Lower leg skin (tissue), 4 donors: ENCODE measurements at regions of chr20 and their contacts with region 1.

Region 1: DNA sequence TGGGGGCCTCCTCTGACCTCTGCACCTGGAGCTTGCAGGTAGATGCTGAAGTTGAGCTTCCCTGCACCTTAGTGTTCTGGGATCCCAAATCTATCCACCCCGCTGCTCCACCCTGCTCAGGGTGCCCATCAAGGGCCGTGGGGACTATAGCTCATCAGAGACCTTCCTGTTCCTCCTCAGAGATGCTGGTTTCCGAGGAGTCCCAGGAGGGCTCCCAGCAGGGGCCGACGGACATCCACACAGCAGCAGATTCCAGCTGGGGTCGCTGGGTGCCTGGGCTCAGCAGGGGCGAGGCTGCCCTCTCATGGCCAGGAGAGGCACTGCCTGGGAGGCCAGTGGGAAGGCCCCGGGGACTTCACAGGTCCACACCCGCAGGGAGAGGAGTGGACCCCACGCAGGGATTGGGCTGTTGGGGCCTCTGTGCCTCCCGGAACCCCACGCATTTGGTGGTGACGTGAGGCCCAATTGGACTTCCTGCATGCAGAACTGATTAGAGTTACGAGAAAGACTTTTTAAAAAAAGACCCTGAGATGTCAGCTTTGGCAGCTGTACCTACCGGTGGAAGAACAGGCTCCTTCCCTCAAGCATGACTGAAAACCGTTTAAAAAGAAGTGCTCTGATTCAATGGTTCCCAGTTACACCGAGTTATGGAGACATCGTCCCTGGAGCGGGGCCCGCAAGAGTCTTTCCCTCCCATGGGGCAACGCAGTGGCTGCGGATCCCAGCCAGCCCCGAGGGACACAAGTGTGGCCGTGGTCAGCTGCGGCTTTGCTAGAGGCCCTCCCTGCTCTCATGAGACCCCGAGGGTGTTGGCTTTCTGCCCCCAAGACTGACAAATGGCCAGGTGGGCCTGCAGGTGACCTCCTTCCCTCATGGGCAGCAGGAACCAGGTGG is 25.3 kb upstream of the SLCO4A1 start:
- DNase-seq: peak in 1 of 2 donors; percentile 94
- H3K4me3 ChIP-seq: no peak overlapping the region
- CTCF ChIP-seq: peak in 1 of 3 donors; percentile 60
- POLR2A ChIP-seq: no peak

Region 2: GRCh38 chr20:62219992-62220665 is 396.8 kb before region 1 on chr20 and contains the start of gene HRH3:
- intact Hi-C with region 1: no loop called
- DNase-seq: no peak
- H3K4me3 ChIP-seq: no peak within 1 kb of the TSS
- CTCF ChIP-seq: no peak
- POLR2A ChIP-seq: no peak
- total RNA-seq, gene HRH3: not detected

Region 3: GRCh38 chr20:62292108-62292507 is 324.9 kb before region 1 on chr20:
- intact Hi-C with region 1: no loop called
- DNase-seq: no peak
- H3K4me3 ChIP-seq: no peak overlapping the region
- CTCF ChIP-seq: no peak
- POLR2A ChIP-seq: no peak

Region 4: DNA sequence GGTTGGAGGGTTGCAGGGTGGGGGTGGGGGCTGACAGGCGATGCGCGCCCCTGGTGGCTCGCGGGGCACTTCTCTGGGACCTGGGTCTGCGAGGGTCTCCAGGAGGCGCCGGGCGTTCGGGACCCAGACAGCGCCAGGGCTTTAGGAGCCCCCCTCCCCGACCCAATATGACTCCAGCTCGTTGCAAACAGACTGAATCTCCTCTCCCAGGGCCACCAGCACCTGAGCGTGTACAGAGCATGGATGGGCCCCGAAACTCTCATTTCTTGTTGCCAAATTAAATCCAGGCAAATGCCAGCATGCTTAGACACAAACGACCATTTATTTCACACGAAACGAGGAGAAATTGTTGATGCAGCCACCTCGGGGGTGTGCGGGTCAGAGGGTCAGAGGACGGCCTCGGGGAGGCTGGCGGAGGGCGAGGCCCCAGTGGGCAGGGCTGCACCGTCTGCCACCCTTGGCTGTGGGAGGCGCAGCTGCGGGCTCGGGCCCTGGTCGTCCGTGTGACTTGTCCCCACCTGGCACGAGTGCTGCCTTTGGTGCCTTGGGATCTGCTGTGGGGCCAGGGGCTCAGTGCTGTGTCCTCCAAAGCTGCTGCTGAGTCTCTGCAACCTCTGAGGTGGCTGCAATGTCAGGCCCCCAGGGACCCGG is 120.3 kb before region 1 on chr20:
- intact Hi-C with region 1: loop called (anchors 10 kb)
- DNase-seq: no peak
- H3K4me3 ChIP-seq: no peak overlapping the region
- CTCF ChIP-seq: no peak
- POLR2A ChIP-seq: no peak

Region 5: DNA sequence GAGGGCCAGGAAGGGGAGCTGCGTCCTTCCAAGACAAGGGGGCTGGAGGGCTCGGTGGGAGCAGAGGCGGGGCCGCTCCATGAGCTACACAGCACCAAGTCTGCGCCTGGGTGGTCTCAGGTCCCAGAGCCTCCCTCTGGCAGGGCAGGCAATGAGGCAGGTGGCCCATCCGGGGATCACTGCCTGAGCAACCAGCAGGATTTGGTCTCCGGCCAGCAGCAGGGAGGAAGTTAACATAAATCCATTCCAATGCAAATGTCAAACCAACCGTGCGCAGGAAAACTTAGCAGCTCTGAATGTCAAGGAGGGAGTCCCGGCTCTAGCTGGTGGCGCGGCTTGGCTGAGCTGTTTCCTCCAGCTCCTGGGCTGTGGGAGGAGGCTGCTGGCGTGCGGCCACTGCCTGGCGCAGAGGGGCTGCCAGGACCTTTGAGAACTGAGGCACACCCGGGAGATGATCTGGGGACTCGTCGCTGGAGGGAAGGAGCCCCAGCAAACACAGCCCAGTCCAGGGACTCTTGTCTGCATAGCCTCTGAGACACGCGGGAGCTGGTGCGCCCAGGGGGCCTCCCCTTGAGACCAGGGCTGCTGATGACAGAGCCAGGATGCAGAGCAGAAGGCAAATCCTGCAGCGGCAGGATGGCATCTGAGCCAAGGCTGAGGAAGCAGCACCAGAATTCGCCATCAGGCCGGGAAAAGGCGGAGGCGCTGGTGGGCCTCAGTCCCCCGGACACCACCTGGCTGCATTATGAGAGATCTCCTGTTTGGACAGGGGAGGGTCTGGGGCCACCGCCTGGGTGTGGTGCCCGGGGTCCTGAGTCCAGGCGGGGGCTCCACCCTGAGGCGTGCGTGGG is 777.3 kb after region 1 on chr20:
- intact Hi-C with region 1: no loop called
- DNase-seq: no peak
- H3K4me3 ChIP-seq: no peak overlapping the region
- CTCF ChIP-seq: no peak
- POLR2A ChIP-seq: no peak